Aorta (tissue), 5 donors: ENCODE measurements at regions of chr11 and their contacts with region 1.

Region 1: DNA sequence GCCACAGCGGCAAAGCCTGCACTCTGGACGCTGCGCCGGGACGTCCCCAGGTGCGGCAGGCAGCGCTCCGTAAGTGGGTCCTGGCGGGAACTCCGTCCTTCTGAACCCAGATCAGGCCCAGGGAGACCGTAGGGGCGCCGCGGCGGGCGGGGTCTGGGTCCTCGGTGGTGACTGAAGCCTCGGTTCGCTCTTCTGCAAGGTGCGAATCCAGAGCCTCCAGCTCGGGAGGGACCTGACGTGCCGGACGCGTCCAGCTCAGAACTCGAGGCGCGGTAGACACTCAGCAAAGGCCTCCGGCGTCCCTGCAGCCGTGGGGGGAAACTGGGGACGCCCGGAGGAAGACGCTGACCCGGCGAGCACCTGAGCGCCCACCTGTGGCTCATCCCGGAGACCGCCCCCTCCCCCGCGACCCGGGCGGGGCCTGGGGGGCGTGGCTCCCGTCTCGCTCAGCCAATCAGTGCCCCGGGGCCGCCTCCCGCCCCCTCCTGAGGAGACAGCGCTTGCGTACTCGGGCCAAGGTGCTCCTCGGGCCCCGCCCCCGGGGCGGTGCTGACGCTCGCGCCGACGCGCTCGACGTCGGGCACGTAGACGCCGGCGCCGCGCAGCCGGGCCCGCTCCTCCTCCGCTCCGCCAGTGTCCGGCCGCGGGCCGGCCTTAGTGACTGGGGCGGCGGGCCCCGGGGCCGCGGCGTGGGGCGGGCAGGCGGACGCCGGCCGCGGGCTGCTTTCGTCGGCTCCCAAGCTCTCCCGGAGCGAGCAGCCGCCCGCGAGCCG is at the start of gene PPFIA1:
- DNase-seq: peak; percentile 97 to 98
- ATAC-seq: peak; percentile 99
- H3K4me3 ChIP-seq: peak within 1 kb of the TSS; percentile 90 to 93
- H3K27ac ChIP-seq: no peak within 1 kb of the TSS
- H3K4me1 ChIP-seq: no peaks in the 10 kb centered on the region
- H3K27me3 ChIP-seq: no peaks in the 10 kb centered on the region
- total RNA-seq, gene PPFIA1: 73.4 to 74.7 TPM

Region 2: GRCh38 chr11:70203749-70204465 is 66.4 kb before region 1 on chr11:
- intact Hi-C with region 1: loop called in 1 of 2 experiments (anchors 1 kb)
- DNase-seq: peak in 1 of 2 donors; percentile 80
- ATAC-seq: peak; percentile 34
- H3K4me3 ChIP-seq: peak overlapping the region; percentile 67 to 96
- H3K27ac ChIP-seq: peak overlapping the region in 1 of 2 donors; percentile 75
- H3K4me1 ChIP-seq: no peaks in the 10 kb centered on the region
- H3K27me3 ChIP-seq: no peaks in the 10 kb centered on the region

Region 3: GRCh38 chr11:70415184-70415583 is 144.9 kb after region 1 on chr11:
- intact Hi-C with region 1: no loop called
- DNase-seq: no peak
- ATAC-seq: no peak
- H3K4me3 ChIP-seq: no peak overlapping the region
- H3K27ac ChIP-seq: no peak overlapping the region
- H3K4me1 ChIP-seq: no peaks in the 10 kb centered on the region
- H3K27me3 ChIP-seq: no peaks in the 10 kb centered on the region